Breast epithelium (tissue), 4 donors: ENCODE measurements at regions of chr5 and their contacts with region 1.

Region 1: DNA sequence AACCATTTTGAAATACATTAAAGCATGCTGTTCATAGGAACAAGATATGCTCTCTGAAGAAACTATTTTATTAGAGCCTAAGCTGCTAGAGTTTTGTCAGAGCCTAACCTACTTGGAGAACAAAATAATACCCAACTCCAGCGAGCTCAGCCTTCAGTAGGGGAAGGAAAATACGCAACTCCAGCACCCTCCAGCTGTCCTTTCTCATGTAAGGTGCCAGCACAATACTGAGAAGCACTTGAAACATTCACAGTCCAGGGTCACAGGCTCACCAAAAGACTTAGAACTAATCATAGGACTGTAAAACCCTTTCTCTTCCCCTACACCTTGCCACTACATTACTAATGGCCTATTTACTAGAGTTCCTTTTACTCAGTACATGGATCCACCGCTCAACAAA is 18.9 kb downstream of the DPYSL3 start:
- DNase-seq: no peak
- H3K4me3 ChIP-seq: no peak overlapping the region
- H3K27ac ChIP-seq: no peak overlapping the region
- H3K4me1 ChIP-seq: no peaks in the 10 kb centered on the region
- H3K27me3 ChIP-seq: no peaks in the 10 kb centered on the region
- CTCF ChIP-seq: no peak
- POLR2A ChIP-seq: no peak

Region 2: DNA sequence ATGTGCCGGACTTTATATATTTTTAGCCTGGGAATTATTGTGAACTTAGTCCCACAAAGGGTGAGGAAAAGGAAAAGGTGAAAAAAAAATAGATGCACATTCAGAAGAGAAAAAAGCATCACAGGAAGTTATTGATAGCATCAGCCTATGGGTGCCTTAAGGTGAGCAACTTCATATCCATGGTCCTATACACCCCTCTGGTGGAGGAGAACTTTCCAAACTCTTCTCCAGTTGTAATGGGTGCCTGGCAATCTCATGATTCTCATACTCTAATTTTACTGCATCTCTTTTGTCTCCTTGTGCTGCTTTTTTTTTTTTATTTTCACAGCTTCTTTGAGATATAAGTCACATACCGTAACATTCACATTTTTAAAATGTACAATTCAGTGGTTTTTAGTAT is 184.2 kb after region 1 on chr5:
- intact Hi-C with region 1: no loop called
- DNase-seq: no peak
- H3K4me3 ChIP-seq: no peak overlapping the region
- H3K27ac ChIP-seq: no peak overlapping the region
- H3K4me1 ChIP-seq: no peaks in the 10 kb centered on the region
- H3K27me3 ChIP-seq: no peaks in the 10 kb centered on the region
- CTCF ChIP-seq: no peak
- POLR2A ChIP-seq: no peak

Region 3: DNA sequence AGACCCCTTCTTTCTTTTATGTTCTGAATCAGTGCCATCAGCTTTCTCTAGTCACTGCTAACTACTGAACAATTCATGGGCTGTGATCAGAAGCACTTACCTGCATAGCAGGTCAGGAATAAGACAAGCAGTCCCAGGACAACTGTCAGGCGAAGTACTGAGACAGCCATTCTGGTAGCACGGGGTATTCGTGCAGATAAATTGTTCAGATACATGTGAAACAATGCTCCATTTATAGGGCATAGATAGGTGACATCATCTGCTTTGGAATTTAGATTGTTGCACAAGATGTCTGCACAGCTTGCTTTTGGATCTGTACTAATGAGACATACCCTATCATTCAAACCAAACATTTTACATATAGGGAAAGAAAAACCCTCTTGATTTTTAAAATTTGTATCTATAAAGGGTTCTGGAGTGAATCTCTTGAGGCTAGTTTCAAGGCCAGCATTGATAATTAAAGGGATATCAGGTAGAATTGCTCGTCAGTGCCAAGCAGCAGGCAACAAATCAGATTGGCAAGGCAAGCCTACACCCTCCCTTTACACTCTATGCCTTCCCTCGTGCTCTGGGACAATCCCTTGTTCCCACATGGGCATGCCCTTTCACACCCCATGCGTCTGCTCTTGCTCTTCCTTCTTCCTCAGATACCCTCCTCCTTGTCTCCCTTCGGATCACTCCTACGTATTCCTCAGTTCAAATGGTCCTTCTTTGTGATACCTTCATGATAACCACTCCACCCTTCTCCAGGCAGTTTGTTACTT is 415.5 kb after region 1 on chr5 and contains the start of gene C5orf46:
- intact Hi-C with region 1: no loop called
- DNase-seq: no peak
- H3K4me3 ChIP-seq: no peak within 1 kb of the TSS
- H3K27ac ChIP-seq: peak within 1 kb of the TSS; percentile 39 to 56
- H3K4me1 ChIP-seq: no peaks in the 10 kb centered on the region
- H3K27me3 ChIP-seq: no peaks in the 10 kb centered on the region
- CTCF ChIP-seq: no peak
- POLR2A ChIP-seq: no peak
- total RNA-seq, gene C5orf46: 5.2 to 9.4 TPM in 2 of 3 donors, not detected in the other

Region 4: DNA sequence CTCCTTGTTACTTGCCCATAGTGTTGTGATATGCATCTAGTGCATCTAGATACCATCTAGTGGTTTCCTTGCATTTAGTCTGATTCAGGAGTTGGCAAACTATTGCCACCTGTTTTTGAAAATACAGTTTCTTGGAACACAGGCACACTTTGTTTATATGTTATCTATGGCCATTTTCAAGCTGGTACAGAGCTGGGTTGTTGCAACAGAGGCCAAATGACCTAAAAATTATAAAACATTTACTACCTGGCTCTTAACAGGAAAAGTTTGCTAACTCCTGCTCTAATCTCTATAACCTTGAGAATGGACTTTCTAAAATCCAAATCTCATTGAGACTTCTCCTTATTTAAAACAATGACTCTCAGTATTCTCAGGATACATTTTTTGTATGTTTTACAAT is 873.4 kb after region 1 on chr5:
- intact Hi-C with region 1: no loop called
- DNase-seq: no peak
- H3K4me3 ChIP-seq: no peak overlapping the region
- H3K27ac ChIP-seq: no peak overlapping the region
- H3K4me1 ChIP-seq: no peaks in the 10 kb centered on the region
- H3K27me3 ChIP-seq: no peaks in the 10 kb centered on the region
- CTCF ChIP-seq: no peak
- POLR2A ChIP-seq: no peak

Region 5: GRCh38 chr5:148740966-148741742 is 1250.2 kb after region 1 on chr5:
- intact Hi-C with region 1: loop called (anchors 10 kb)
- DNase-seq: no peak
- H3K4me3 ChIP-seq: no peak overlapping the region
- H3K27ac ChIP-seq: no peak overlapping the region
- H3K4me1 ChIP-seq: no peaks in the 10 kb centered on the region
- H3K27me3 ChIP-seq: no peaks in the 10 kb centered on the region
- CTCF ChIP-seq: peak; percentile 69 to 79 (median 77)
- POLR2A ChIP-seq: no peak